Activated CD4-positive, alpha-beta T cell treated with anti-CD3 and anti-CD28 coated beads for 36 hours (primary cell): ENCODE measurements at regions of chr17 and their contacts with region 1.

Region 1: GRCh38 chr17:6443692-6444569 is at the start of gene PIMREG:
- DNase-seq: peak; percentile 97
- ATAC-seq: peak; percentile 98
- H3K4me3 Mint-ChIP-seq: peak within 1 kb of the TSS; percentile 77
- H3K27ac Mint-ChIP-seq: peak within 1 kb of the TSS; percentile 90
- H3K4me1 Mint-ChIP-seq: peaks cover 12% of the 10 kb centered on the region
- H3K27me3 Mint-ChIP-seq: peaks cover 7% of the 10 kb centered on the region
- total RNA-seq, gene PIMREG: 8.4 to 10.0 TPM

Region 2: GRCh38 chr17:6523330-6523729 is 79.4 kb after region 1 on chr17:
- CTCF ChIA-PET with region 1: no interaction called
- POLR2A ChIA-PET with region 1: no interaction called
- intact Hi-C with region 1: no loop called
- DNase-seq: no peak
- ATAC-seq: no peak
- H3K4me3 Mint-ChIP-seq: no peak overlapping the region
- H3K27ac Mint-ChIP-seq: no peak overlapping the region
- H3K4me1 Mint-ChIP-seq: no peaks in the 10 kb centered on the region
- H3K27me3 Mint-ChIP-seq: no peaks in the 10 kb centered on the region

Region 3: DNA sequence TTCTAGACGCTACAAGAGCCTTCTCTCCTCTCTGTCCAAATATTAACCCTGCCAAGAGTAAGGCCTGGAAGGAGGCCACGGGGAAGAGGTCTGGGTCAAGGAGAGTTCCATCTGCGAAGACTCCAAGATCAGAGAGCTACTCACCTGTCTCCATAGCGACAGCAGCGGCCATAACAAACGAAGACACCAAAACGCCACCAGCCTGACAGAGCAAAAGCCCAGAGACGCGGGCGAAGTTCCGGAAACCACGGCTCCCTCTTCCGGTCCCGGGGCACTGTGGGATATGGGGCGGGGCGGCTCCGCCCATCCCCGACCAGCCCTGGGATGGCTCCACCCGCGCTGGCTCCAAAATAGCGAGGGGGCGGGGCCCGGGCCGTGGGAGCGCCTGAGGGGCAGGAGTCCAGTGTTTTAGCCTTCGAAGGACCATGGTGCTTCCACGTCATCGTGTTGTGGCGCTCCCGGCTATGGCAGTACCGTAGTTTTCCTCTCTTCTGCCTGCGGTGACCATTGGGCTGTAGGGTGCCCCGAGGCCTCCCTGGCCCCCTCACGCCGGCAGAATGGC is 207.5 kb after region 1 on chr17 and contains the starts of genes C17orf100 and MED31:
- CTCF ChIA-PET with region 1: interaction called, 3 read pairs
- POLR2A ChIA-PET with region 1: no interaction called
- intact Hi-C with region 1: loop called in 1 of 2 experiments (anchors 1 kb)
- DNase-seq: peak; percentile 97
- ATAC-seq: peak; percentile 95
- H3K4me3 Mint-ChIP-seq: peak within 1 kb of the TSS; percentile 98
- H3K27ac Mint-ChIP-seq: peak within 1 kb of the TSS; percentile 99
- H3K4me1 Mint-ChIP-seq: peaks cover 55% of the 10 kb centered on the region
- H3K27me3 Mint-ChIP-seq: peaks cover 2% of the 10 kb centered on the region
- total RNA-seq, gene C17orf100: 1.6 to 2.0 TPM
- total RNA-seq, gene MED31: 17.7 to 24.5 TPM

Region 4: DNA sequence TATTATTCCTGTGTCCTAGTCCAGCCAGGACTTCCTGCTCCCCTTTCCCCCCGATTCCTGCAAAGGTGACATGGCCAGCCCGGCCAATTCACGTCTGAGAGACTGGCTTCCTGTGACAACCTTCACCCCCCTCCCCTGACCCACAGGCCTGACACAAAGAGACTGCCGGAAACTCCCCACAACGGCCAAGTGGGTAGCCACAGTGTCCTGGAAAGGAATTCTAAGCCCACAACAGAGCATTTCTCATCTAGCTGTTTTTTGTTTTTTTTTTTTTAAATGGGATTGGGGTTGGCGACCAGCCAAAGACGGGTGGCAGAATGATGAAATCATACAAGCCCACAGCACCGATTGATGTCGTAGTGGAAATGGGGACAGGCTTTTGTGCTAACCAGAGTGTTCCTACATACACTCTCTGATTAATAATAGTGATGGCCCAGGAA is 309.1 kb after region 1 on chr17:
- CTCF ChIA-PET with region 1: no interaction called
- POLR2A ChIA-PET with region 1: no interaction called
- intact Hi-C with region 1: loop called in 1 of 2 experiments (anchors 5 kb)
- DNase-seq: peak; percentile 69
- ATAC-seq: peak; percentile 25
- H3K4me3 Mint-ChIP-seq: peak overlapping the region; percentile 3
- H3K27ac Mint-ChIP-seq: peak overlapping the region; percentile 91
- H3K4me1 Mint-ChIP-seq: peaks cover 48% of the 10 kb centered on the region
- H3K27me3 Mint-ChIP-seq: no peaks in the 10 kb centered on the region